ENCODE measurements at regions of chrX and their contacts with region 1.

Region 1: DNA sequence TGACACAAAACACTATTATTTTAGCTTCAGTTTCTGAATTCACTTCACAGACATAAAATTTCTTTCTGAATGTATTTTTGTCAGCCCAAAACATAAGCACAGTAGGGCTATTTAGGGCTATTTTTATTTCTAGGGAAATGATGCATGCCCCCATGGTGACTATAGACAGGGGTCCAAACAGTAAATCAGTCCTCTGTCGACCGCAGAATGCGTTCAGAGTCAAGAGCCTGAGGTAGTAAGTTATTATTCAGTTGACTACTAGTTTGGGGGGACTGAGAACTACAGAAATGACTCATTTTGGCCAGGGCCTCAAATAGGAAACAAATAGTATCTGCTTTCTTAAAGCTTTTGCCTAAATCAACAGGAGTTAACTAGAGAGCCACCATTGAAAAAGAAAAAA is 414.4 kb downstream of the AFF2 start:
- DNase-seq: peak; percentile 72
- ATAC-seq: peak; percentile 91
- H3K4me3 ChIP-seq: no peak overlapping the region
- H3K27ac ChIP-seq: peak overlapping the region; percentile 47; the same call in 1 of the 2 replicates
- H3K4me1 ChIP-seq: peaks cover 6% of the 10 kb centered on the region
- H3K27me3 ChIP-seq: no peaks in the 10 kb centered on the region; a peak in 1 of 4 replicates
- CTCF ChIP-seq: no peak
- EP300 ChIP-seq: peak in 1 of 2 experiments; percentile 21; a peak in 2 of 4 replicates
- POLR2A ChIP-seq: no peak
- RAD21 ChIP-seq: 0 out of 2 replicates have a peak, but pooled peaks have one; percentile 5

Region 2: GRCh38 chrX:149129767-149130166 is 215.0 kb after region 1 on chrX:
- CTCF ChIA-PET with region 1: no interaction called
- POLR2A ChIA-PET with region 1: no interaction called
- RAD21 ChIA-PET with region 1: no interaction called
- SMC1A ChIA-PET with region 1: interaction called, 3 read pairs
- in situ Hi-C with region 1: no loop called
- intact Hi-C with region 1: loop called (anchors 10 kb)
- DNase-seq: no peak
- ATAC-seq: peak; percentile 66
- H3K4me3 ChIP-seq: no peak overlapping the region
- H3K27ac ChIP-seq: no peak overlapping the region
- H3K4me1 ChIP-seq: no peaks in the 10 kb centered on the region
- H3K27me3 ChIP-seq: no peaks in the 10 kb centered on the region
- CTCF ChIP-seq: no peak
- EP300 ChIP-seq: no peak
- POLR2A ChIP-seq: no peak
- RAD21 ChIP-seq: no peak

Measured in GM12878 (cell line).